PC-3 (cell line): ENCODE measurements at regions of chr13 and their contacts with region 1.

Region 1: DNA sequence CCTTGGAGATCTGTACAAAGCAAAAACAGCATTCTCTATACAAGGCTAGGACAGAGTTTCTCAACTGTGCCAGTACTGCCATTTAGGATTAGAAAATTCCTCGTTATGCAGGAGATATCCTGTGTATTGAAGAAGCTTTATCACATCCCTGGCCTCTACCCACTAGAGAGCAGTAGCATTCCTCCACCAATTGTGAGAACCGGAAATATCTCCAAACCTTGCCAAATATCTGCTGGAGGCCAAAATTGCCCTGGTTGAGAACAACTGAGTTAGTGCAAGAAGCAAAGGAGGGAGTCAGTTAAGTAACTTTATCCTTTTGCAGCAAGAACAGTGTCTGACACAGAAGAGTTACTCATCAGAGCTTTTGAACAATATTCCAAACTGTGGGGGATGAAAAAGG is 16.2 kb upstream of the FREM2 start:
- DNase-seq: no peak
- ATAC-seq: no peak
- H3K4me3 ChIP-seq: no peak overlapping the region
- H3K27ac ChIP-seq: no peak overlapping the region
- H3K4me1 ChIP-seq: no peaks in the 10 kb centered on the region
- H3K27me3 ChIP-seq: peaks cover 6% of the 10 kb centered on the region
- CTCF ChIP-seq: no peak

Region 2: DNA sequence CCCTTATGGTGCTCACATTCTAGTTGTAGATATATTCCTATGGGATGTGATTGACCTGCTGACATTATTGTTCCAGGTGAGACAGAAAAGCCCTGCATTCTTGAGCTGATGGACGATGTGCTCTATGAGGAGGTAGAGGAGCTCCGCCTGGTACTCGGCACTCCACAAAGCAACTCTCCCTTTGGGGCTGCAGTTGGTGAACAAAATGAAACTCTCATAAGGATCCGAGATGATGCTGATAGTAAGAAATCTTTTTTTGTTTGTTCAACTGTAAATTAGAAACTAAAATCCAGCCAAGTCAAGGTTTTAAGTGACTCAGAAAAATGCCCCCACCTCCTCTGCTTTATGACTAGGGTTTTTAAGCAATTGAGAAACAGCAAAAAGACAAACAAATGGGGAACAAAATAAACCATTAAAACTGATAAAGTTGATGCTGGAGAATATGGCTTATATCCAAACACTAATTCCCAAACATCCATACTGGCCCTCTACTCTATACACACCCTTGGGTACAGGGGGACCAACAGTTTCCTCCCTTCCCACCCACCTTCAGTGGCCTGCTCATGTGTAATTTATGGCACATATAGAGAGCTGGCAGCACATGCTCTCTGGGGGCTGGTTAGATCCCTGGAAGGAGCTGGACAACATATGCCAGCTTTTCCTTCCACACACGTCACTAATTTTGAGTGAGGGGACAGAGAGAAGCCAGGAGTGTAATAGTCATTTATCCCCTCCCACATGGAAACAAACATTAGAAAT is 180.4 kb after region 1 on chr13:
- CTCF ChIA-PET with region 1: no interaction called
- POLR2A ChIA-PET with region 1: interaction called, 25 read pairs
- intact Hi-C with region 1: no loop called
- DNase-seq: no peak
- ATAC-seq: no peak
- H3K4me3 ChIP-seq: no peak overlapping the region
- H3K27ac ChIP-seq: no peak overlapping the region
- H3K4me1 ChIP-seq: no peaks in the 10 kb centered on the region
- H3K27me3 ChIP-seq: peaks cover 49% of the 10 kb centered on the region
- CTCF ChIP-seq: no peak